Activated CD8-positive, alpha-beta T cell treated with anti-CD3 and anti-CD28 coated beads for 36 hours (primary cell): ENCODE measurements at regions of chr15 and their contacts with region 1.

Region 1: DNA sequence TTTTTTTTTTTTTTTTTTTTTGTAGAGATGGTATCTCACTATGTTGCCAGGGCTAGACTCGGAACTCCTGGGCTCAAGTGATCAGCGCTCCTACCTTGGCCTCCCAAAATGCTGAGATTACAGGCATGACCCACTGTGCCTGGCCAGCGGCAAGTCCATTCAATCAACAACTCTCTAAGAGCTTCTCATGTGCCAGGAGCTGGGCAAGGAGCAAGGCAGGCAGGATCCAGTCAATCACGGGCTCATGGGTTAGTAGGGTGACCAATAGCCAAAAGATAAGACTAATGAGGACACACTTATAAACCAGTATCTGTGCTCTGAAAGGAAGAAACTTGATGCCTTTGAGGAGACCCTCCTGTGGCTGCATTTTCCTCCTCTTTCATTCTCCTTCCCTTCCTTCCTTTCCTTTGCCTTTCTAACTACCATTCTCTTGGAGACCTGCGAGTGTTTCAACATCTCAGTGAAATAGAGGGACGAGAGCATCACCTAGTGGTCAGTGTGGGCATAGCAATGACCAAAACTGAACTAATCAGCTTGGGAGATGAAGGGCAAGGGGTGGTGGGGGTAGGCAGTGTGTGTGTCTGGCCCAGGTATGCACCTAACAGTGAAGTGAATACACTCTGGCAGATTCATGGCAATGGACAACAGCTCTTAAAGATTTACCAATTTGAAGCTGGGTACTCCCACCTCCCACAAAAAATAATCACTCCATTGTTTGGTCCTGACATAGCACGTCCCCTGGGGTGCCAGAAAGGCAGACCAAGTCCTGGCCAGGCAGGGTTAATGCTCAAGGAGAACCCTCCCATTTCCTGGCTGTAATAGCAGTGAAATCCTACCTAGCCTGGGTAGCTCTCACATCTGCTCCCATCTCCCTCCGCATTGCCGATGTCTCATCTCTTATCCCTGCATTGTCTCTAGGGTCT is 6.2 kb downstream of the RPP25 start:
- DNase-seq: peak; percentile 89
- ATAC-seq: peak; percentile 92
- H3K4me3 Mint-ChIP-seq: no peak overlapping the region
- H3K27ac Mint-ChIP-seq: no peak overlapping the region
- H3K4me1 Mint-ChIP-seq: peaks cover 12% of the 10 kb centered on the region
- H3K27me3 Mint-ChIP-seq: no peaks in the 10 kb centered on the region
- CTCF ChIP-seq: peak; percentile 96

Region 2: GRCh38 chr15:74781431-74782258 is 168.7 kb before region 1 on chr15 and contains the start of gene CSK:
- CTCF ChIA-PET with region 1: interaction called, 15 read pairs
- POLR2A ChIA-PET with region 1: no interaction called
- intact Hi-C with region 1: no loop called
- DNase-seq: peak; percentile 76
- ATAC-seq: peak; percentile 40
- H3K4me3 Mint-ChIP-seq: peak within 1 kb of the TSS; percentile 98
- H3K27ac Mint-ChIP-seq: peak within 1 kb of the TSS; percentile 98
- H3K4me1 Mint-ChIP-seq: peaks cover 46% of the 10 kb centered on the region
- H3K27me3 Mint-ChIP-seq: no peaks in the 10 kb centered on the region
- CTCF ChIP-seq: peak; percentile 66
- total RNA-seq, gene CSK: 254 to 260 TPM

Region 3: DNA sequence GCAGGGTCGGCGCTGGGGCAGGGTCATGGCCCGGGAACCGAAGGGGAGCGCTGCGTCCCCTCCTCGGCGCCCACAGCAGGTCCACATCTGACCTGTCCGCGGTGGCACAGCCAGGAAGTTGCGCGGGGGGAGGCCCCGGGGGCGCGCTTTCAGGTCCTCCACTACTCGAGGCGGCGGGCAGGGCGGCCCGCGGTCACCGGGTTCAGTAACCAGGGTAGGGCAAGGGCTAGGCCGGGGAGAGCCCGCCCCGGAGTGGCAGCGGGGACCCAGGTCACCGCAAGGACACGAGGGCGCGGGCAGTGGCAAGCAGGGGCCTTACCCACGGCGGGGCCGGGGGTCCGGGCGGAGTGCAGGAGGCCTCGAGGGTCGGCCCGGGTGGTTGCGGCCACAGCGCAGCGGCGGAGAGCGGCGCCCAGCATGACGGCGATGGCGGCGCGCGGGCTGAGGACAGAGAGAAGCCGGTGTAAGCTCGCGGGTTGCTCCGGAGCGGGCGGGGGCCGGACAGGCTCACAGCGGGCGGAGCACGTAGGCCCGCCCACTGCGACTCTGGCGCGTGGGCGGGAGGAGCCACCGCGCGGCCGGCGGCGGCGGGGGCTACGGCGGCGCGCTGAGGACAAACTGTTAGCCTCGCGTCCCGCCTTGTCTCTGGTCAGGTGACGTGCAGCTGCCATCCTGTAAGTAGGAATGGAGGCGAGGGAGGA is 12.6 kb before region 1 on chr15 and contains the start of gene COX5A:
- CTCF ChIA-PET with region 1: interaction called, 16 read pairs
- POLR2A ChIA-PET with region 1: interaction called, 5 read pairs
- intact Hi-C with region 1: no loop called
- DNase-seq: peak; percentile 95
- ATAC-seq: peak; percentile 94
- H3K4me3 Mint-ChIP-seq: peak within 1 kb of the TSS; percentile 87
- H3K27ac Mint-ChIP-seq: peak within 1 kb of the TSS; percentile 94
- H3K4me1 Mint-ChIP-seq: peaks cover 20% of the 10 kb centered on the region
- H3K27me3 Mint-ChIP-seq: no peaks in the 10 kb centered on the region
- CTCF ChIP-seq: no peak
- total RNA-seq, gene COX5A: 342 TPM

Region 4: DNA sequence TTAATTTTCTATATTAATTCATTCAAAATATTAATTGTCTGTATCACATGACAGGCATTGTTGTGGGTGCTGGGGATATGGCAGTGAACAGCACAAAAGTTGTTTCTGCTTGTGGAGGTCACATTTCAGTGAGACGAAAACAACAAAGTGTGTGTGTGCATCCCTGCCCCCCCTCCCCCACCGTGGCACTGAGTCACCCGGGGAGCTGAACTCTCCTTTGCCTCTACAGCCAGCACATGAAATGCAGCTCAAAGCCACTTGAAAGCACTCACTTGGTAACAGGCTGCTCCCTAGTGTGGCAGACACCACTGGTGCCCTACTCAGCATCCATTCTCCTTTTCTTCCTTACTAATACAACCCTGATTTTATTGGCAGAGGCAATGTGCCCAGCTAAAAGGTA is 28.2 kb after region 1 on chr15:
- CTCF ChIA-PET with region 1: interaction called, 13 read pairs
- POLR2A ChIA-PET with region 1: interaction called, 5 read pairs
- intact Hi-C with region 1: no loop called
- DNase-seq: peak; percentile 82
- ATAC-seq: peak; percentile 89
- H3K4me3 Mint-ChIP-seq: no peak overlapping the region
- H3K27ac Mint-ChIP-seq: no peak overlapping the region
- H3K4me1 Mint-ChIP-seq: peaks cover 15% of the 10 kb centered on the region
- H3K27me3 Mint-ChIP-seq: peaks cover 10% of the 10 kb centered on the region
- CTCF ChIP-seq: no peak

Region 5: DNA sequence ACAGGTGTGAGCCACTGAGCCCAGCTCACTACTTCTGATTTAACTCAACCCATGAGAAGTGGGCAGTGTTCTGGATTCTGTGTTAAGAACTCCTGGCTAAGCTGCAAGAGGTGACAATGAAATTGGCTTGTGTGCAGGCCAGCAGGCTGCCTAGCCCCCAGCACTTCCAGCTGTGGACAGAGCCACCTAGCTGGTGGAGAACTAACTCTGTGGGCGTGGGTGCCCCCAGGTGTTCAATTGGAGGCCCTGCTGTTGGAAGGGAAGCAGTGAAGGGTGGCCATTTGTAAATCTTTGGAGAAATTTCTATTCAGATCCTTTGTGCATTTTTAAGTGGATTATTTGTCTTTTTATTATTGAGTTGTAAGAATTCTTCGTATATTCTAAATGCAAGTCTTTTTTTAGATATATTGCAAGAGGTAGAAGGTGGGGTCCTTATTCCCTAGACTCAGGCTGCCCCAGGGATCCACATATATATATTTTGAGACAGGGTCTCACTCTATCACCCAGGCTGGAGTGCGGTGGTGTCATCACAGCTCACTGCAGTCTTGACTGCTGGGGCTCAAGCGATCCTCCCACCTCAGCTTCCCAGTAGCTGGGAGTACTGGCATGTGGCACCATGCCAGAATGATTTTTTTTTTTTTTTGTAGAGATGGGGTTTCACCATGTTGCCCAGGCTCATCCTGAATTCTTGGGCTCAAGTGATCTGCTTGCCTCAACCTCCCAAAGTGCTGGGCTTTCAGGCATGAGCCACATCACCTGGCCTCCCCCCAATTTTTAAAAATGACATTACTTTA is 37.9 kb after region 1 on chr15:
- CTCF ChIA-PET with region 1: interaction called, 10 read pairs
- POLR2A ChIA-PET with region 1: interaction called, 5 read pairs
- intact Hi-C with region 1: no loop called
- DNase-seq: peak; percentile 79
- ATAC-seq: peak; percentile 60
- H3K4me3 Mint-ChIP-seq: no peak overlapping the region
- H3K27ac Mint-ChIP-seq: no peak overlapping the region
- H3K4me1 Mint-ChIP-seq: peaks cover 13% of the 10 kb centered on the region
- H3K27me3 Mint-ChIP-seq: peaks cover 13% of the 10 kb centered on the region
- CTCF ChIP-seq: peak; percentile 56